PC-3 (cell line): ENCODE measurements at regions of chr10 and their contacts with region 1.

Region 1: DNA sequence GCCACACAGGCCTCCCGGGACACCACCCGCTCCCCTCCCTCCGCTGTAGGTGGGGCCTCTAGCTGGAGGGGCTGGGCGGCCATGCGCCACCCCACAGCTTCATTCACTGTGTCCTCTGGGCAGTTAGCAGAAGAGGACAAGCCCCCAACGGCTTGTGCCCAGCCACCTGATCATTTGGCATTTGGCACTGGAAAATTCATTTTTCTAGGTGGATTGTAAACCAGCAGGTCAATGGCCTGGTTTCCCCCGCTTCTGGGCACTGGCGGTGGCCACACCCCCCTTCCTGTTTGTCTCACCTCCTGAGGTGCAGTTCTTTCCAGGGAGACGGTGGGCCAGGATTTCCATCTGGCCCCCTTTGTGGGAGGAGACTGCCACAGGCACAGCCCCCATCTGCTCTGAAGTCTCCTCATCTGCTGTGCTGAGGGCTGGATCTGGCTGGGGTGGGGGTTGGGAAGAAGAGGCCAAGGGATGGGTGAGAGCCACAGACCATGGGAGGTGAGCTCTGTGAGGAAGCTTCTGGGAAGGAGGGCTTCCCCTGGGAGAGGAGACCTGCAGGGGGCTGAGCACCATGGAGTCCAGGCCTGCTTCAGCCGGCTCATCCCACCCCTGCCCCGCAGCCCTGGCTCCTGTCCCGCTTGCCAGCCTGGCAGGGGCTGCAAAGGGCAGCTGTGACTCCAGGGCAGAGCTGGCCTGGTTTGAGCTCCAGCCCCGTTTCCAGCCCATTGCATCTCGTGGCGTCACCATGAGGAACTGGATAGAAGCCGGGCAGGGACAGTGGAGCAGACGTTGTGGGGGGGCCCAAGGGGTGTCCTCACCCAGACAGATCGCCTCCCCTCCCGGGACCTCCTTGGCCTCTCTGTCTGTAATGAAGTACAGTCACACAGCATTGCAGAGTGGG is 40.1 kb upstream of the SLC29A3 start:
- DNase-seq: no peak
- ATAC-seq: no peak
- H3K4me3 ChIP-seq: no peak overlapping the region
- H3K27ac ChIP-seq: no peak overlapping the region
- H3K4me1 ChIP-seq: no peaks in the 10 kb centered on the region
- H3K27me3 ChIP-seq: no peaks in the 10 kb centered on the region
- CTCF ChIP-seq: no peak

Region 2: GRCh38 chr10:70920565-70920964 is 358.4 kb before region 1 on chr10:
- CTCF ChIA-PET with region 1: no interaction called
- POLR2A ChIA-PET with region 1: no interaction called
- intact Hi-C with region 1: loop called (anchors 5 kb)
- DNase-seq: peak; percentile 68
- ATAC-seq: no peak
- H3K4me3 ChIP-seq: no peak overlapping the region
- H3K27ac ChIP-seq: no peak overlapping the region
- H3K4me1 ChIP-seq: peaks cover 12% of the 10 kb centered on the region
- H3K27me3 ChIP-seq: no peaks in the 10 kb centered on the region
- CTCF ChIP-seq: 0 out of 2 replicates have a peak, but pooled peaks have one; percentile 18